CD14-positive monocyte (primary cell): ENCODE measurements at regions of chr19 and their contacts with region 1.

Region 1: DNA sequence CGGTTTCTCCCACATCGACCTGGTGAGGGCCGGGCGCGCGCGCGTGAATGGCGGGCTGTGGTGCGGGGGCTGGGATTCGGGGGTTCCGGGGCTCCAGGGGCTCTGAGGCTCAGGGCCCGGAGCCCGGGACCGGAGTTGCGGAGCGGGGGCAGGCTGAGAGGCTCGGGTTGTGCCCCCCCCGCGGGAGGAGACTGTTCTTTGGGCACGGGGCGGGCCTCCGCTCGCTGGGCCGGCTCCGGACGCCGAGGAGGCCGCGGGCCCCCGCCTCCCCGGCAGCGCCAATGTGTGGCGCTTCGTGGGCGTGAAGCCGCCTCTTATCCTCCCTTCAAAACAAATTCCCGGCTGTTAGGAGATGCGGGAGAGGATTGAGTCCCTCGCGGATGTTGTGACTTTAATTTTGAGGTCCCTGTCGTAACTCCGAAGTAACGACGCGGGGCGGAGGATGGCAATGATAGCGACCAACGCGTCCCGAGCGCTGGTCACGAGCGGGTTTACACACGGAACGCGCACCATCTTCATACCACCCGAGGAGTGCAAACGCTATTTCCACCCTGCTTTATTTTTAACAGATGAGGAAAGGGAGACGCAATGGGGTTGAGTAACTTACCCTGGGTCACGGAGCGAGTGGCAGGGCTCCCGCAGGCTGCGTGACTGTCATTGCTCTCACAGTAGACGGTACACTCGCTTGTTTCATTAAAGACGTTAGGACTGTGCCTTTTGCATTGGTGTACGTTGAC is 536 bp downstream of the UBA2 start:
- DNase-seq: peak; percentile 35 to 51 (median 42)
- H3K4me3 ChIP-seq: peak overlapping the region; percentile 62 to 92 (median 90)
- H3K4me3 Mint-ChIP-seq: peak overlapping the region; percentile 95 to 96
- H3K27ac ChIP-seq: peak overlapping the region; percentile 33 to 81
- H3K27ac Mint-ChIP-seq: peak overlapping the region; percentile 89 to 96 (median 92)
- H3K4me1 ChIP-seq: peaks cover 18 to 31% of the 10 kb centered on the region in 2 donors
- H3K4me1 Mint-ChIP-seq: peaks cover 24% of the 10 kb centered on the region
- H3K27me3 ChIP-seq: no peaks in the 10 kb centered on the region
- H3K27me3 Mint-ChIP-seq: peaks cover 0 to 2% (median 0%) of the 10 kb centered on the region in 3 donors
- CTCF ChIP-seq: no peak

Region 2: GRCh38 chr19:34327851-34328250 is 100.9 kb before region 1 on chr19:
- intact Hi-C with region 1: no loop called
- DNase-seq: no peak
- H3K4me3 ChIP-seq: no peak overlapping the region
- H3K4me3 Mint-ChIP-seq: no peak overlapping the region
- H3K27ac ChIP-seq: no peak overlapping the region
- H3K27ac Mint-ChIP-seq: no peak overlapping the region
- H3K4me1 ChIP-seq: no peaks in the 10 kb centered on the region
- H3K4me1 Mint-ChIP-seq: no peaks in the 10 kb centered on the region
- H3K27me3 ChIP-seq: no peaks in the 10 kb centered on the region
- H3K27me3 Mint-ChIP-seq: peaks cover 0 to 7% (median 4%) of the 10 kb centered on the region in 3 donors
- CTCF ChIP-seq: no peak

Region 3: GRCh38 chr19:34359140-34359953 is 69.4 kb before region 1 on chr19:
- intact Hi-C with region 1: loop called in 1 of 2 experiments (anchors 2 kb)
- DNase-seq: peak; percentile 93 to 97 (median 97)
- H3K4me3 ChIP-seq: peak overlapping the region; percentile 30 to 82 (median 52)
- H3K4me3 Mint-ChIP-seq: peak overlapping the region; percentile 84 to 88
- H3K27ac ChIP-seq: peak overlapping the region; percentile 61 to 76
- H3K27ac Mint-ChIP-seq: peak overlapping the region; percentile 81 to 93 (median 90)
- H3K4me1 ChIP-seq: peaks cover 12 to 19% of the 10 kb centered on the region in 2 donors
- H3K4me1 Mint-ChIP-seq: peaks cover 19% of the 10 kb centered on the region
- H3K27me3 ChIP-seq: no peaks in the 10 kb centered on the region
- H3K27me3 Mint-ChIP-seq: peaks cover 0 to 2% (median 2%) of the 10 kb centered on the region in 3 donors
- CTCF ChIP-seq: peak; percentile 48